BJ (cell line): ENCODE measurements at regions of chr16 and their contacts with region 1.

Region 1: GRCh38 chr16:46853713-46854443 is 22.9 kb upstream of the C16orf87 start:
- DNase-seq: no peak
- H3K4me3 ChIP-seq: no peak overlapping the region
- H3K27me3 ChIP-seq: peaks cover 1% of the 10 kb centered on the region; the same call in 1 of the 2 replicates
- CTCF ChIP-seq: peak; percentile 92

Region 2: GRCh38 chr16:46757339-46758050 is 96.4 kb before region 1 on chr16:
- CTCF ChIA-PET with region 1: no interaction called
- POLR2A ChIA-PET with region 1: no interaction called
- DNase-seq: no peak
- H3K4me3 ChIP-seq: no peak overlapping the region
- H3K27me3 ChIP-seq: peaks cover 3% of the 10 kb centered on the region; the same call in 1 of the 2 replicates
- CTCF ChIP-seq: no peak

Region 3: GRCh38 chr16:46899443-46900143 is 45.7 kb after region 1 on chr16:
- CTCF ChIA-PET with region 1: interaction called, 231 read pairs
- POLR2A ChIA-PET with region 1: no interaction called
- DNase-seq: no peak
- H3K4me3 ChIP-seq: no peak overlapping the region
- H3K27me3 ChIP-seq: no peaks in the 10 kb centered on the region
- CTCF ChIP-seq: no peak

Region 4: DNA sequence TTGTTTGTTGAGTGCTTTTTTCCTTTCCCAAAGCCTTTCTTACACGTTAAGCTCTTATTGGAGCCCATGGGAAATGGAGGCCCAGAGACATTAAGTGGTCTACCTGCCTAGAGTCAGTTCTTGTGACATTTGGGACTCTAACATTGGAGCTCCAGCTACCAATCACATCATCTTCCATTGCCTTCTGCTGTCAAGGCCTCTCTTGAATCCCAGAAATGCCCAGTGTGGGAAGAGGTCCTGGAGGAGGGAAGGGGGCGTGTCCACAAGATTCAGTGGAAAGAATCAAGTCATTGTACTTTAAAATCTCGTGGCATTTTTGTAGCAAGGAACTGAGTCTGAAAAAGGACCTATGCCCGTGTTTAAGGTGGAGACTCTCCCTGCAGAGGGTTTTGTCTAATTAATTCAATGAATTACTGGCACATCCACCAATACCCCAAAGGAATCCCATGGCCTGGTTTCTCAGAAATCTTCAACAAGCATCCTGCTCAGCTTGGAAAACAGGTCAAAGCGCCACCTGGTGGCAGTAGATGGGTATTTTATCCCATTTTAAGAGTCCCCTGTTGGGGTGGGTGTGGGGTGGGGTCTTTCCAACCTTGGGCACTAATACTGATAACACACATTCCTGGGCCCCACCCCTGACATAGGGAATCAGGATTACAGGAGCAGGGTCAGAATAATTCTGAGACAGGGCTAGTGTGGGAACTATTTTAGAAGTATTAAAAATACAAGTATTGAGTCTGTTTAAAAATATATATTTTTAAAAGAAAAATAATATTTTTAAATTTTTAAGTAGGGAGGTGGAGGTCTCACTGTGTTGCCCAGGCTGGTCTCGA is 54.9 kb after region 1 on chr16:
- CTCF ChIA-PET with region 1: interaction called, 231 read pairs
- POLR2A ChIA-PET with region 1: no interaction called
- DNase-seq: no peak
- H3K4me3 ChIP-seq: no peak overlapping the region
- H3K27me3 ChIP-seq: no peaks in the 10 kb centered on the region
- CTCF ChIP-seq: peak; percentile 75

Region 5: GRCh38 chr16:46918861-46919792 is 65.2 kb after region 1 on chr16:
- CTCF ChIA-PET with region 1: interaction called, 231 read pairs
- POLR2A ChIA-PET with region 1: interaction called, 3 read pairs
- DNase-seq: no peak
- H3K4me3 ChIP-seq: no peak overlapping the region
- H3K27me3 ChIP-seq: no peaks in the 10 kb centered on the region
- CTCF ChIP-seq: no peak

Region 6: GRCh38 chr16:46929378-46930332 is 75.8 kb after region 1 on chr16:
- CTCF ChIA-PET with region 1: interaction called, 48 read pairs
- POLR2A ChIA-PET with region 1: interaction called, 11 read pairs
- DNase-seq: no peak
- H3K4me3 ChIP-seq: no peak overlapping the region
- H3K27me3 ChIP-seq: no peaks in the 10 kb centered on the region
- CTCF ChIP-seq: peak; percentile 92